ENCODE measurements at regions of chr3 and their contacts with region 1.

Region 1: GRCh38 chr3:155983838-155984474 is 113.5 kb downstream of the GMPS start:
- DNase-seq: peak in 2 of 4 experiments; percentile 12 to 36
- ATAC-seq: peak; percentile 85
- H3K4me3 ChIP-seq: no peak overlapping the region
- H3K27ac ChIP-seq: no peak overlapping the region
- H3K4me1 ChIP-seq: no peaks in the 10 kb centered on the region
- H3K27me3 ChIP-seq: no peaks in the 10 kb centered on the region
- CTCF ChIP-seq: peak; percentile 28 to 62 (median 42); a peak in 4 of 6 replicates
- EP300 ChIP-seq: no peak
- POLR2A ChIP-seq: no peak
- RAD21 ChIP-seq: peak in 1 of 2 experiments; percentile 64; a peak in 3 of 4 replicates

Region 2: GRCh38 chr3:155164306-155164705 is 819.6 kb before region 1 on chr3:
- CTCF ChIA-PET with region 1: no interaction called
- POLR2A ChIA-PET with region 1: no interaction called
- in situ Hi-C with region 1: no loop called
- intact Hi-C with region 1: no loop called
- DNase-seq: no peak
- ATAC-seq: no peak
- H3K4me3 ChIP-seq: no peak overlapping the region
- H3K27ac ChIP-seq: no peak overlapping the region
- H3K4me1 ChIP-seq: no peaks in the 10 kb centered on the region
- H3K27me3 ChIP-seq: no peaks in the 10 kb centered on the region
- CTCF ChIP-seq: no peak
- EP300 ChIP-seq: no peak
- POLR2A ChIP-seq: no peak
- RAD21 ChIP-seq: no peak

Region 3: DNA sequence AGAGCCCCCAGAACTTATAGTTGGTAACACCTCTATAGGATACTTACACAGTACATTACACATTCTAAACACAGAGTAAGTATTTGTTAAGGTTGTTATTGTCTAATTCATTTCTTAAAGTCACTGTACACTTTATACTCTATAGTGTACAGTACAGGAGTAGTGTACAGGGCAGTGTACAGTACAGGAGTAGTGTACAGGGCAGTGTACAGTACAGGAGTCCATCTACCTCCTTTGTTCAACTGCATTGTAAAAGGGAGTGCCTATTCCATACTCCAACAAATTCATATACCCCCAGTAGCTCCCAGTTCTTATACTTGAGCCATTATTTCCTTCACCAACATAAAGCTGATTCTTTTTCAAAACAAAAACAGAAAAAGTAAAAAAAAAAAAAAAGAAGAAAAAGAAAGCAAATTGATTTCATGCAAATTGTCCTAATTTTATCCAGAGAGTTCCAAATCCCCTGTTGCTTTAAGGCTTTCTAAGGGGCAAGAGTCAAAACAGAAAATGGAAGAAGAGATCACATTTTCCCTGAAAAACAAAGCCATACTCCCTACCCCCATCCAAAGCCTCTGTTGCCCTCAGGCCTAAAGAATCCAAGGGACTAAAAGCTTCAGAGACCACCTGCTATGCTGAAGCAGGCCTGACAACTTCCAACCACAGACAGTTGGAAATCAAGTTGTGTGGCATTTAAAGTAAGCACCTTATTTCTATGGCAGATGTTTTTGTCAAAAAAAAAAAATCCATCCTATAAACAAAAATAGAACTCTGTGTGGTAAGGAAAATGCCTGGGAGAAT is 364.6 kb before region 1 on chr3:
- CTCF ChIA-PET with region 1: no interaction called
- POLR2A ChIA-PET with region 1: no interaction called
- in situ Hi-C with region 1: no loop called
- intact Hi-C with region 1: no loop called
- DNase-seq: no peak
- ATAC-seq: no peak
- H3K4me3 ChIP-seq: no peak overlapping the region
- H3K27ac ChIP-seq: no peak overlapping the region
- H3K4me1 ChIP-seq: no peaks in the 10 kb centered on the region
- H3K27me3 ChIP-seq: no peaks in the 10 kb centered on the region
- CTCF ChIP-seq: no peak
- EP300 ChIP-seq: no peak
- POLR2A ChIP-seq: no peak
- RAD21 ChIP-seq: no peak

Region 4: GRCh38 chr3:155737844-155738460 is 246.0 kb before region 1 on chr3:
- CTCF ChIA-PET with region 1: no interaction called
- POLR2A ChIA-PET with region 1: no interaction called
- in situ Hi-C with region 1: no loop called
- intact Hi-C with region 1: no loop called
- DNase-seq: peak in 1 of 4 experiments; percentile 14
- ATAC-seq: peak; percentile 67
- H3K4me3 ChIP-seq: no peak overlapping the region
- H3K27ac ChIP-seq: no peak overlapping the region
- H3K4me1 ChIP-seq: peaks cover 3 to 7% of the 10 kb centered on the region in 2 experiments; a peak in 1 of 5 replicates
- H3K27me3 ChIP-seq: no peaks in the 10 kb centered on the region
- CTCF ChIP-seq: no peak
- EP300 ChIP-seq: no peak
- POLR2A ChIP-seq: no peak
- RAD21 ChIP-seq: no peak

Region 5: DNA sequence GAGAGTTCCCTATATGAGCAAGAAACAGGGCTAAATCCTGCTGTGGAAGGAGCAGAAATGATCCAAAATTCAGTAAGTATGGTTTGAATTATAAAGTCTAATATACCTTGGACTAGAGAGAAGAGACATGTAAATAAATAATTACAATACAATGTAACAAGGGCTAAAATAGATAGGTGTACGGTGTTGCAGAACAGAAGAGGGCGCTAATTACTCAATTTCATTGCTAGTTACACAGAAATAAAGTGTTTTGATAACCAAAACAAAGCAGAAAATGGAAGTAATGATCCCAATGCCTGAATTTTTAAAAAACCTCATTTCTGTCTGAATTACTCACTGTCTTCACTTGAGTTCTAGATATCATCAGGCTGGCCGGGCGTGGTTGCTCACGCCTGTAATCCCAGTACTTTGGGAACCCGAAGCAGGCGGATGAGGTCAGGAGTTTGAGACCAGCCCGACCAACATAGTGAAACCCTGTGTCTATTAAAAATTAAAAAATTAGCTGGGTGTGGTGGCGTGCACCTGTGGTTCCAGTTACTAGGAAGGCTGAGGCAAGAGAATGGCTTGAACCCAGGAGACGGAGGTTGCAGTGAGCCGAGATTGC is 230.8 kb before region 1 on chr3:
- CTCF ChIA-PET with region 1: no interaction called
- POLR2A ChIA-PET with region 1: no interaction called
- in situ Hi-C with region 1: no loop called
- intact Hi-C with region 1: loop called (anchors 1 kb)
- DNase-seq: peak in 2 of 4 experiments; percentile 39 to 57
- ATAC-seq: peak; percentile 89
- H3K4me3 ChIP-seq: no peak overlapping the region
- H3K27ac ChIP-seq: no peak overlapping the region
- H3K4me1 ChIP-seq: peaks cover 0 to 5% of the 10 kb centered on the region in 2 experiments; a peak in 2 of 5 replicates
- H3K27me3 ChIP-seq: no peaks in the 10 kb centered on the region
- CTCF ChIP-seq: peak; percentile 48 to 81 (median 50); a peak in 4 of 6 replicates
- EP300 ChIP-seq: no peak
- POLR2A ChIP-seq: no peak
- RAD21 ChIP-seq: peak; percentile 71 to 92

Region 6: GRCh38 chr3:155995525-155996351 is 11.8 kb after region 1 on chr3:
- CTCF ChIA-PET with region 1: no interaction called
- POLR2A ChIA-PET with region 1: no interaction called
- in situ Hi-C with region 1: no loop called
- intact Hi-C with region 1: no loop called
- DNase-seq: peak; percentile 22 to 61 (median 42)
- ATAC-seq: peak; percentile 95
- H3K4me3 ChIP-seq: no peak overlapping the region
- H3K27ac ChIP-seq: no peak overlapping the region
- H3K4me1 ChIP-seq: no peaks in the 10 kb centered on the region
- H3K27me3 ChIP-seq: peaks cover 7 to 13% of the 10 kb centered on the region in 2 experiments; a peak in 3 of 5 replicates
- CTCF ChIP-seq: peak; percentile 44 to 82 (median 69); a peak in 5 of 6 replicates
- EP300 ChIP-seq: no peak
- POLR2A ChIP-seq: no peak
- RAD21 ChIP-seq: peak; percentile 71 to 83

Measured in K562 (cell line).